PC-9 (cell line): ENCODE measurements at regions of chr21 and their contacts with region 1.

Region 1: GRCh38 chr21:42303443-42303842 is 11.8 kb downstream of the TFF3 start:
- DNase-seq: no peak
- H3K4me3 ChIP-seq: no peak overlapping the region
- H3K27ac ChIP-seq: no peak overlapping the region
- H3K4me1 ChIP-seq: 0 out of 2 replicates have a peak, but pooled peaks cover 9% of the 10 kb centered on the region
- H3K27me3 ChIP-seq: no peaks in the 10 kb centered on the region
- CTCF ChIP-seq: no peak

Region 2: GRCh38 chr21:41207401-41208068 is 1095.9 kb before region 1 on chr21:
- CTCF ChIA-PET with region 1: no interaction called
- POLR2A ChIA-PET with region 1: interaction called, 11 read pairs
- intact Hi-C with region 1: no loop called
- DNase-seq: no peak
- H3K4me3 ChIP-seq: no peak overlapping the region
- H3K27ac ChIP-seq: no peak overlapping the region
- H3K4me1 ChIP-seq: no peaks in the 10 kb centered on the region
- H3K27me3 ChIP-seq: no peaks in the 10 kb centered on the region
- CTCF ChIP-seq: no peak

Region 3: GRCh38 chr21:42433946-42434551 is 130.6 kb after region 1 on chr21:
- CTCF ChIA-PET with region 1: no interaction called
- POLR2A ChIA-PET with region 1: no interaction called
- intact Hi-C with region 1: no loop called
- DNase-seq: peak; percentile 16 to 71
- H3K4me3 ChIP-seq: no peak overlapping the region
- H3K27ac ChIP-seq: no peak overlapping the region
- H3K4me1 ChIP-seq: peaks cover 6% of the 10 kb centered on the region; the same call in 1 of the 2 replicates
- H3K27me3 ChIP-seq: no peaks in the 10 kb centered on the region
- CTCF ChIP-seq: no peak

Region 4: DNA sequence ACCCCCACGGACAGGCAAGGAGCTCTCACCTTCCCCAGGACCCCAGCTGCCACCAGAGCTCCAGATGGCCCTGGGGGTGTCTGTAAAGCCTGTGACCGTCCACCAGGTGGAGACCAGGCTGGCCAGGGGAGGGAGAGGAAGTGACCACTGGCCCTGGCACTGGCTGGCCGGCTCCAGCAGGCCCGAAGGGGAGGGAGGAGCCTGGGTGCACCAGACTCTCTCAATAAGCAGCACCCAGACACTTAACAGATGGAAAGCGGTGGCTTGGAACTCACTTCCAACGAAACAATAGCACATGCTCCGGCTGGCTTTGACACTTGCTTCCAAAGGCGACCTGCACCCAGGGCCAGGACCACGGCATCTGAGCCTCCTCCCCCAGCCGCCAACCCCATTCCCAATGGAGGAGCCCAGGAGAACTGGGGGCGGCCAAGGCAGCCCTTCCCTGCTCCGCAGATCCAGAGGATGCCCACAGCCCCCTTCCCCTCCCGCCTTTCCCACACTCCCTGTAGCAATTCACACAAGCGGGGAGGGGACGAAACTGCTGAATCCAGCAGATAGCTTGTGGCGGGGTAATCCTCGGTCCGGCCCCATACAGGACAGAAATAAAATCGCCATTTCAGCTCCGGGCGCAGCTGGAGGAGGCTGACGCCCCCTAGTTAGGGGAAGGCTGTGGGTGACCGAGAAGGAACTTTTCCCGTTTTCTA is 349.2 kb after region 1 on chr21:
- CTCF ChIA-PET with region 1: no interaction called
- POLR2A ChIA-PET with region 1: no interaction called
- intact Hi-C with region 1: no loop called
- DNase-seq: peak; percentile 50 to 72
- H3K4me3 ChIP-seq: no peak overlapping the region
- H3K27ac ChIP-seq: no peak overlapping the region
- H3K4me1 ChIP-seq: peaks cover 24% of the 10 kb centered on the region
- H3K27me3 ChIP-seq: no peaks in the 10 kb centered on the region
- CTCF ChIP-seq: peak; percentile 68; the same call in 1 of the 2 replicates